Endothelial cell of umbilical vein (primary cell): ENCODE measurements at regions of chr9 and their contacts with region 1.

Region 1: DNA sequence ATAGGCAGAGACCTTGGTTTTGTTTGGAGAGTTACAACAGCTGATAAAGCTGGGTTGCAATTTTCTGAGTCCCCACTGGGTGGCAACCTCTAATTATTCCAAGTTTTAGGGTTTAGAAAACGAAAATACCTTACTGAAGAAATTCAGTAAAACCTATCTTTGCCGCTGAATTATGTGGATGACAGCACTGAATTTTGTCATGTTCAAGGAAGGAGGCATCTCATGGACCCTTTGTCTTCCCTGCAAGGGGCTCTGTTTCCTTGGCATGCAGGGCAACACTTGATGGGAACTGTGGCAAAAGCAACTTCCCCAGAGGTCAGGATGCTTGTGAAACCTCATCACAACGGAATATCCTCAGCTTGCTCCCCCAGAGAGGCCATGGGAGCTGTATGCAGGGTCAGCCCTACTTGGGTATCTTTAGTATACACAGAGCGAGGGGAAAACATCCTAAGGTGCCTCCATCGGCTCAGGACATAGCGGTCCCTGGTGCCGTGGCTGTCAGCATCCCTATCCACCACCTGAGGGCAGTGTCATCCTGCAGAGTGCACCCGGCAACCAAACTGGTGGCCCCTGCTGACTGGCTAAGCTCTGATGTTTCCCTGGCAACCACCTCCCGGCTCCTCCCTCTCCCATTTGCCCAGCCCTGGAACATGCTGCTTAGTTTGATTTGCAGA is 123.1 kb downstream of the RXRA start:
- DNase-seq: peak; percentile 92
- H3K4me3 ChIP-seq: no peak overlapping the region
- H3K27ac ChIP-seq: no peak overlapping the region
- H3K4me1 ChIP-seq: no peaks in the 10 kb centered on the region
- H3K27me3 ChIP-seq: no peaks in the 10 kb centered on the region
- CTCF ChIP-seq: peak; percentile 90 to 92
- POLR2A ChIP-seq: no peak

Region 2: GRCh38 chr9:134434894-134435506 is 14.4 kb before region 1 on chr9:
- CTCF ChIA-PET with region 1: interaction called, 11 read pairs
- POLR2A ChIA-PET with region 1: no interaction called
- dilution Hi-C with region 1: no loop called
- intact Hi-C with region 1: no loop called
- DNase-seq: peak; percentile 94
- H3K4me3 ChIP-seq: no peak overlapping the region
- H3K27ac ChIP-seq: peak overlapping the region; percentile 15
- H3K4me1 ChIP-seq: peaks cover 7% of the 10 kb centered on the region
- H3K27me3 ChIP-seq: no peaks in the 10 kb centered on the region
- CTCF ChIP-seq: no peak
- POLR2A ChIP-seq: no peak

Region 3: GRCh38 chr9:134670042-134670525 is 220.7 kb after region 1 on chr9:
- CTCF ChIA-PET with region 1: interaction called, 11 read pairs
- POLR2A ChIA-PET with region 1: no interaction called
- dilution Hi-C with region 1: no loop called
- intact Hi-C with region 1: no loop called
- DNase-seq: peak; percentile 26
- H3K4me3 ChIP-seq: no peak overlapping the region
- H3K27ac ChIP-seq: no peak overlapping the region
- H3K4me1 ChIP-seq: peaks cover 15% of the 10 kb centered on the region
- H3K27me3 ChIP-seq: no peaks in the 10 kb centered on the region
- CTCF ChIP-seq: no peak
- POLR2A ChIP-seq: no peak

Region 4: GRCh38 chr9:134698587-134699342 is 249.4 kb after region 1 on chr9:
- CTCF ChIA-PET with region 1: interaction called, 7 read pairs
- POLR2A ChIA-PET with region 1: no interaction called
- dilution Hi-C with region 1: no loop called
- intact Hi-C with region 1: loop called (anchors 1 kb)
- DNase-seq: peak; percentile 52
- H3K4me3 ChIP-seq: no peak overlapping the region
- H3K27ac ChIP-seq: no peak overlapping the region
- H3K4me1 ChIP-seq: no peaks in the 10 kb centered on the region
- H3K27me3 ChIP-seq: no peaks in the 10 kb centered on the region
- CTCF ChIP-seq: peak; percentile 79 to 91
- POLR2A ChIP-seq: no peak

Region 5: GRCh38 chr9:135085830-135086546 is 636.6 kb after region 1 on chr9:
- CTCF ChIA-PET with region 1: no interaction called
- POLR2A ChIA-PET with region 1: no interaction called
- dilution Hi-C with region 1: no loop called
- intact Hi-C with region 1: loop called (anchors 1 kb)
- DNase-seq: peak; percentile 72
- H3K4me3 ChIP-seq: no peak overlapping the region
- H3K27ac ChIP-seq: no peak overlapping the region
- H3K4me1 ChIP-seq: no peaks in the 10 kb centered on the region
- H3K27me3 ChIP-seq: peaks cover 15% of the 10 kb centered on the region in 2 experiments
- CTCF ChIP-seq: peak; percentile 89 to 90
- POLR2A ChIP-seq: no peak